ENCODE measurements at regions of chr19 and their contacts with region 1.

Region 1: DNA sequence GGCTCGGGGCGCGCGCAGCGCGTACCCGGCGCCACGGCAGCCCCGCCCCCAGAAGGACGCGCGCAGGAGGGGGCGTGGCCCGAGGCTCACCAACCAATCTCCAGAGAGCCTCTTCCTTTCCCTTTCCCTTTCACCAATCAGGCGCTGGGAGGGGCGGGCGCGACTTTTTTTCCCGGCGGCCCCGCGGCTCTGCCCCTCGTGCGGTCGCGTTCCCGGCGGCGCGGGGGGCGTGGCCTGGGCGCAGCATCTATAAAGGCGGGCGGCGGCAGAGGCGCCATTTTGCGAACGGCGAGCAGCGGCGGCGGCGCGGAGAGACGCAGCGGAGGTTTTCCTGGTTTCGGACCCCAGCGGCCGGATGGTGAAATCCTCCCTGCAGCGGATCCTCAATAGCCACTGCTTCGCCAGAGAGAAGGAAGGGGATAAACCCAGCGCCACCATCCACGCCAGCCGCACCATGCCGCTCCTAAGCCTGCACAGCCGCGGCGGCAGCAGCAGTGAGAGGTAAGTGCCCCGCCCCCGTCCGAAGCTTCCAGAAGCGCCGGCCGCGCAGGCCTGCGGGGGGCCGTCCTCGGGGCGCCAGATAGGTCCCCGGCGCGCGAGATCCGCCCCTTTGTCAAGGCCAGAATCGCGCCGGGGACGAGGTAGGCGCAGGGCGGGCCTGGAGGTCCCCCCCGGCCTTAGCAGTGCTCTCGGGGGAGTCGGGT is 12.6 kb downstream of the PEAK3 start:
- DNase-seq: peak; percentile 98 to 99 (median 99)
- H3K4me3 ChIP-seq: peak overlapping the region; percentile 52 to 83
- H3K4me3 Mint-ChIP-seq: peak overlapping the region; percentile 88 to 95 (median 94)
- H3K27ac ChIP-seq: peak overlapping the region; percentile 91
- H3K27ac Mint-ChIP-seq: peak overlapping the region; percentile 86 to 99 (median 94)
- H3K4me1 ChIP-seq: peaks cover 52% of the 10 kb centered on the region
- H3K4me1 Mint-ChIP-seq: peaks cover 17 to 48% (median 34%) of the 10 kb centered on the region in 4 donors
- H3K27me3 ChIP-seq: no peaks in the 10 kb centered on the region
- H3K27me3 Mint-ChIP-seq: no peaks in the 10 kb centered on the region

Region 2: DNA sequence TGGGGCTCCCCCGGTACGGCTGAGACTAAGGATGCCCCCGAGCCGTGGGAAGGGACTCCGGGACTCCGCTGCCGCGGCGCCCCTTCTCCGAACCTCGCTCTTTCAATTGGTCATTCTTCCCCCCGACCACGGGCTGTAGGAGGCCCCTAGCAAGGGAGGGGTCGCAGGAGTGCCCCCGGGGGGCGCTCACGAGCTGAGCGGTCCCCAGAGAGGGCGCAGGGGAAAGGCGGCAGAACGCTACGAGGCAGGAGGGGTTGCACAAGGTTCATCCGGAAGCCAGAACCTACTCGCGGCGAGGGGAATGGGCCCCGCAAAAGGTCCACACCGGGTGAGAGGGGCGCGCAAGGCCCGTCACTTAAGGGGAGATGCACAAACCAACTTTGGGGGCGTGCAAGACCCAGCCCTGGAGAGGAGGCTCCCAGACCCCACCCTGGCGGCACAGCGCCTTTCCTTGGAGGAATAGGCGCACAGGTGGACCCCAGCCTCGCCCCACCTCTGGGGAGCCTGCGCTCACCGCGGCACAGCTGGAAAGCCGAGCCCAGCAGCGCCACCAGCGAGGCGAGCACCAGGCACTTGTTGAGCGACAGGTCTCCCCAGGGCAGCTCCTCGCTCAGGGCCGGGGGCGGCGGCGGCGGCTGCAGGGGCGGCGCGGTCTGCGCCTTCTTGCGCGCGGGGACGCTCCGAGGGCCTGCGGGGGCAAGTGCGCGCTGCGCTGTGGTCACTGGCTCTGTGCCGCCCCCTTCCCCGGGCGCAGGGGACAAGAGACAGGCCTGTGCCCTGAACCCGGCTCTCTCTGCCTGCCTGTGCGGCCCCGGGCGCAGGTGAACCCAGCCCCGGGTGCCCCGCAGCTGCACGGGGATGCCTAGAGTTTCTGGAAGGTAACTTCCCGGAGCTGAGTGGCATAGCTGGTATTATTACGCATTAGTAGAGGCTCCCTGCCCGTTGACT is 16.0 kb before region 1 on chr19:
- CTCF ChIA-PET with region 1: interaction called, 30 read pairs
- POLR2A ChIA-PET with region 1: interaction called, 167 read pairs
- intact Hi-C with region 1: loop called (anchors 1 kb)
- DNase-seq: peak; percentile 55 to 61 (median 57)
- H3K4me3 ChIP-seq: peak overlapping the region in 1 of 2 donors; percentile 52
- H3K4me3 Mint-ChIP-seq: peak overlapping the region; percentile 63 to 84 (median 79)
- H3K27ac ChIP-seq: no peak overlapping the region
- H3K27ac Mint-ChIP-seq: peak overlapping the region in 5 of 7 donors; percentile 23 to 68 (median 43)
- H3K4me1 ChIP-seq: peaks cover 47% of the 10 kb centered on the region
- H3K4me1 Mint-ChIP-seq: peaks cover 5 to 25% (median 15%) of the 10 kb centered on the region in 4 donors
- H3K27me3 ChIP-seq: peaks cover 4% of the 10 kb centered on the region
- H3K27me3 Mint-ChIP-seq: no peaks in the 10 kb centered on the region

Region 3: DNA sequence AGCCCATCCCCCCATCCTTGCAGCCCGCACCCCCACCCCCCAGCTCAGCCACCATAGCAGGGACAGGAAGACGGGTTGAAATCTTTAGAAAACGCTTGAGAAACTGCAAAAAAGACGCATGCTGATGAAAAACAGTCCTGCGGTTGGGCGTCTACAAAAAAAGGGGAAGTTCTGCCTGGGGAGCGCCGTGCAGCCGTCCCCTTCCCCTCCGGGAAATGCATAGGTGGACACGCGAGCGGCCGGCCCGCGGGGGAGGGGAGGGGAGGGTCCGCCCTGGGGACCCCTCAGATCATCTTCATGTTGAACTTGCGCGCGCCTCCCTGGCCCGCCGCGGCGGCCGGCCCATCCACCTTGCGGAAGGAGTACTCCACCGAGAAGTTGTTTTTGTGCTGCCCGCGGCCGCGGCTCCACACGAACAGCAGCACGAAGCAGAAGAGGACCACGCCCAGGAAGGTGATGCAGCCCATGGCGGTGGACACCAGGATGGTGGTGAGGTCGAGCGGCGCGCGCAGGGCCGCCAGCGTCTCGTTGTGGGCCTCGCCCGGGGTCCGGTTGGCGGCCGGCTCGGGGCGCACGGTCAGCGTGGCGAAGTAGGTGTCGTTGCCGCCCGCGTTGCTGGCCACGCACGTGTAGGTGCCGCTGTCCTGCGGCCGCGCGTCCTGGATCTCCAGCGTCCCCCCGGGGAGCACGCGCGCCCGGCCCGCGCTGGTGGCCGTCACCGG is 20.5 kb after region 1 on chr19:
- CTCF ChIA-PET with region 1: interaction called, 35 read pairs
- POLR2A ChIA-PET with region 1: interaction called, 48 read pairs
- intact Hi-C with region 1: no loop called
- DNase-seq: peak; percentile 60 to 73 (median 65)
- H3K4me3 ChIP-seq: peak overlapping the region in 1 of 2 donors; percentile 67
- H3K4me3 Mint-ChIP-seq: peak overlapping the region; percentile 87 to 94 (median 90)
- H3K27ac ChIP-seq: peak overlapping the region; percentile 39
- H3K27ac Mint-ChIP-seq: peak overlapping the region; percentile 70 to 94 (median 86)
- H3K4me1 ChIP-seq: peaks cover 24% of the 10 kb centered on the region
- H3K4me1 Mint-ChIP-seq: peaks cover 10 to 39% (median 24%) of the 10 kb centered on the region in 4 donors
- H3K27me3 ChIP-seq: no peaks in the 10 kb centered on the region
- H3K27me3 Mint-ChIP-seq: peaks cover 0 to 2% of the 10 kb centered on the region in 2 donors

Region 4: GRCh38 chr19:2328401-2329148 is 59.2 kb after region 1 on chr19 and contains the starts of genes LSM7 and SPPL2B:
- CTCF ChIA-PET with region 1: interaction called, 3 read pairs
- POLR2A ChIA-PET with region 1: interaction called, 5 read pairs
- intact Hi-C with region 1: loop called (anchors 5 kb)
- DNase-seq: peak; percentile 91 to 92 (median 91)
- H3K4me3 ChIP-seq: peak within 1 kb of the TSS; percentile 82 to 88
- H3K4me3 Mint-ChIP-seq: peak within 1 kb of the TSS; percentile 99 to 100 (median 100)
- H3K27ac ChIP-seq: peak within 1 kb of the TSS; percentile 76
- H3K27ac Mint-ChIP-seq: peak within 1 kb of the TSS; percentile 97 to 100 (median 99)
- H3K4me1 ChIP-seq: peaks cover 49% of the 10 kb centered on the region
- H3K4me1 Mint-ChIP-seq: peaks cover 22 to 61% (median 47%) of the 10 kb centered on the region in 4 donors
- H3K27me3 ChIP-seq: no peaks in the 10 kb centered on the region
- H3K27me3 Mint-ChIP-seq: no peaks in the 10 kb centered on the region
- total RNA-seq, gene LSM7: 107 to 108 TPM
- total RNA-seq, gene SPPL2B: 76.8 to 82.8 TPM

Region 5: DNA sequence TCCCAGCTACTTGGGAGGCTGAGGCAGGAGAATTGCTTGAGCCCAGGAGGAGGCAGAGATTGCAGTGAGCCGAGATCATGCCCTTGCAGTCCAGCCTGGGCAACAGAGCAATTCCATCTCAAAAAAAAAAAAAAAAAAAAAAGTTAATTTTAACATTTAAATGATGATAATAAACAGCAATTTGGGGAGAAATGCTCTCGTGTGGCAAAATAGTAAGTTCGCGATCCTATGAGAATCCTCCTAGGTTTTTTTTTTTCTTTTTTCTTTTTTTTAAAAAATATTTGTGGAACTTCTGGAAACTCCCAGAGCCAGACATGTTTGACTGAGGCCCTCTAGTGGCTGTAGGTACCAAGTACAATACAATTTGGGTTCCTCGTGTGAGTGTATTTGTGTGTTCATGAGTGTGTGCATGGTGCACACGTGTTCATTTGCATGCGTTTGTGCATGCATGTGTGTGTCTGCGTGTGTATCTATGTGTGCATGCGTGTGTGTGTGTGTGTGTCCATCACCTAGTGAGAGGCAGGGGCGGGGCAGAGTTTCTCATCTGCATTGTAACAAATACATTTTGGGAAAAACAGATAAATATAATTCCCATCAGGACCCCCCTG is 121.8 kb after region 1 on chr19:
- CTCF ChIA-PET with region 1: interaction called, 81 read pairs
- POLR2A ChIA-PET with region 1: interaction called, 25 read pairs
- intact Hi-C with region 1: no loop called
- DNase-seq: peak; percentile 50 to 66 (median 51)
- H3K4me3 ChIP-seq: no peak overlapping the region
- H3K4me3 Mint-ChIP-seq: peak overlapping the region in 1 of 8 donors; percentile 78
- H3K27ac ChIP-seq: no peak overlapping the region
- H3K27ac Mint-ChIP-seq: peak overlapping the region in 2 of 7 donors; percentile 53 to 69
- H3K4me1 ChIP-seq: no peaks in the 10 kb centered on the region
- H3K4me1 Mint-ChIP-seq: peaks cover 2 to 15% (median 4%) of the 10 kb centered on the region in 4 donors
- H3K27me3 ChIP-seq: no peaks in the 10 kb centered on the region
- H3K27me3 Mint-ChIP-seq: peaks cover 2% of the 10 kb centered on the region in 2 donors